Activated CD4-positive, alpha-beta T cell treated with anti-CD3 and anti-CD28 coated beads, Interleukin-2, amount 10 ng/mL, durations not matched to agents 24 days and 14 days (primary cell): ENCODE measurements at regions of chr19 and their contacts with region 1.

Region 1: GRCh38 chr19:16542045-16542909 is at the start of gene CHERP:
- DNase-seq: peak; percentile 99
- H3K4me3 Mint-ChIP-seq: peak within 1 kb of the TSS; percentile 91
- H3K27ac Mint-ChIP-seq: peak within 1 kb of the TSS; percentile 90
- H3K4me1 Mint-ChIP-seq: peaks cover 38% of the 10 kb centered on the region
- H3K27me3 Mint-ChIP-seq: no peaks in the 10 kb centered on the region
- total RNA-seq, gene CHERP: 88.6 and 89.8 TPM in 2 replicates

Region 2: DNA sequence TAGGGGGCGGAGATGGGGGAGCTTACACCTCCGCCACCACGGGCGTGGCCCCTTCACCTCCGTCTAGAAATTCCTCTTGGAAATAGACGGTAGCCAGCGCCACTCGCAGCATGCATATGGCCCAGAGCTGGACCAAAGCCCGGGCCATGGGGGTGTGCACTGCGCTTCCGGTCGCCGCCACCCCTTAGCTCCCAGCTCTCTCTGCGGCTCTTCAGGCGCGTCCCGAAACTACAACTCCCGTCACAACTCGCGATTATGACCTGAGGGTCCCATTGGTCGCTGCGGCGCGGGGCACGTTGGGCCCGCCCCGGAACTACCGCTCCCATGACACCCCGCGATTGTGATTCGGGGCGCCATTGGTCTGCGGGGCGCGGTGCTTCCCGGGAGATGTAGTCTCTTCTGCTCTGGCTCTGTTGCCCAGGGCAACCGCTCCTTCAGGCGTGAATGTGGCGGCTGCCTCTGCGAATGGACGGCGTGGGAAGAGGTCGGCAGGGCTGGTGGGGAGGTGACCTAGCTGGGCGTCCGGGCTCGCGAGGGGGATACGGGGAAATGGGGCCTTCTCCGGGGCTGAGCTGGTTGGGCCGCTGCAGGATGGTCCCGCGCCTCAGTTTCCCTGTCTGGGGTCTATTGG is 46.2 kb before region 1 on chr19 and contains the starts of genes C19orf44 and CALR3:
- intact Hi-C with region 1: loop called (anchors 1 kb)
- DNase-seq: peak; percentile 99
- H3K4me3 Mint-ChIP-seq: peak within 1 kb of the TSS; percentile 96
- H3K27ac Mint-ChIP-seq: peak within 1 kb of the TSS; percentile 93
- H3K4me1 Mint-ChIP-seq: peaks cover 14% of the 10 kb centered on the region
- H3K27me3 Mint-ChIP-seq: no peaks in the 10 kb centered on the region
- total RNA-seq, gene C19orf44: 4.9 and 5.4 TPM in 2 replicates
- total RNA-seq, gene CALR3: not detected in 2 replicates

Region 3: GRCh38 chr19:16566161-16566560 is 23.9 kb after region 1 on chr19:
- intact Hi-C with region 1: loop called (anchors 1 kb)
- DNase-seq: peak; percentile 94
- H3K4me3 Mint-ChIP-seq: peak overlapping the region; percentile 70
- H3K27ac Mint-ChIP-seq: peak overlapping the region; percentile 94
- H3K4me1 Mint-ChIP-seq: peaks cover 33% of the 10 kb centered on the region
- H3K27me3 Mint-ChIP-seq: no peaks in the 10 kb centered on the region

Region 4: GRCh38 chr19:16572332-16573211 is 30.3 kb after region 1 on chr19 and contains the start of gene SLC35E1:
- intact Hi-C with region 1: loop called (anchors 2 kb)
- DNase-seq: peak; percentile 98
- H3K4me3 Mint-ChIP-seq: peak within 1 kb of the TSS; percentile 93
- H3K27ac Mint-ChIP-seq: peak within 1 kb of the TSS; percentile 88
- H3K4me1 Mint-ChIP-seq: peaks cover 39% of the 10 kb centered on the region
- H3K27me3 Mint-ChIP-seq: no peaks in the 10 kb centered on the region
- total RNA-seq, gene SLC35E1: 60.2 and 65.0 TPM in 2 replicates

Region 5: DNA sequence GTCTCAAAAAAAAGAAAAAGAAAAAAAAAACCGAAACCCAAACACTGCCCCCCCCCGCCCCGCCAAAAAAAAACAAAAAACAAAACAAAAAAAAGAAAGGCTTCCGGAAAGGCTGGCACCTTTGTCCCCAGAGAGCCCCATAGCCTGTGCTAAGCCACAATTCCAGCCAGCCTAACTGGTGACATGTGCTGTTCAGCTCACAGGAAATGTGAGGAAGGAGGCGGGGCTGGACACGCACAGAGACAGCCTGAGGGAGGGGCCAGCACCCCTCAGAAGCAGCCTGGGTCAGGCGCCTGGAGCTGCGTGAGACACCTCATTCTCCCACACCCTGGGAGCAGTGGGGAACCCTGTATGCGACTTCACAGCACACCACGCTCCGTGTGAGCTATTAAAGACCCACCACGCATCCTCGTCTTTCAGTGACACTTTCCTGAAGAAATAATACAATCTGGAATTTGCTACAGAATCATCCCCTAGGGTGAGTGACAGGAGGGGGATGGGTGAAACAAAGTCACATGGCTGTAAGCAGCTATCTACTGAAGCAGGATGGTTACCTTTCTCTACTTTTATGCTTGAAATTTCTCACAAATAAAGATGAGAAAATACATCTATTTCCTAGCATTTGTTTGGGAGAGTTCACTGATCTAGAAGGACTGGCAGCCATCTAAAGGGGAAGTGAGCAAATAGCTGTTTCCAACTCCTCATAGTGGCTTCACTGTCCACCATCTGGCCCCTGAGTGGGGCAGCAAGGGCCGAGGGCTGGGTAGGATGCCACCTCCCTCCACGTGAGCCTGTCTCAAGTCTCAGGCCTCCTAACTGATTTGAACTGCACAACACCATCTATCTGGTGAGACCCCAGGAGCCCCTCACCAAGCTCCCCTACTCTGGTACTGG is 42.2 kb after region 1 on chr19:
- intact Hi-C with region 1: loop called (anchors 1 kb)
- DNase-seq: peak; percentile 97
- H3K4me3 Mint-ChIP-seq: peak overlapping the region; percentile 87
- H3K27ac Mint-ChIP-seq: peak overlapping the region; percentile 96
- H3K4me1 Mint-ChIP-seq: peaks cover 67% of the 10 kb centered on the region
- H3K27me3 Mint-ChIP-seq: no peaks in the 10 kb centered on the region

Region 6: DNA sequence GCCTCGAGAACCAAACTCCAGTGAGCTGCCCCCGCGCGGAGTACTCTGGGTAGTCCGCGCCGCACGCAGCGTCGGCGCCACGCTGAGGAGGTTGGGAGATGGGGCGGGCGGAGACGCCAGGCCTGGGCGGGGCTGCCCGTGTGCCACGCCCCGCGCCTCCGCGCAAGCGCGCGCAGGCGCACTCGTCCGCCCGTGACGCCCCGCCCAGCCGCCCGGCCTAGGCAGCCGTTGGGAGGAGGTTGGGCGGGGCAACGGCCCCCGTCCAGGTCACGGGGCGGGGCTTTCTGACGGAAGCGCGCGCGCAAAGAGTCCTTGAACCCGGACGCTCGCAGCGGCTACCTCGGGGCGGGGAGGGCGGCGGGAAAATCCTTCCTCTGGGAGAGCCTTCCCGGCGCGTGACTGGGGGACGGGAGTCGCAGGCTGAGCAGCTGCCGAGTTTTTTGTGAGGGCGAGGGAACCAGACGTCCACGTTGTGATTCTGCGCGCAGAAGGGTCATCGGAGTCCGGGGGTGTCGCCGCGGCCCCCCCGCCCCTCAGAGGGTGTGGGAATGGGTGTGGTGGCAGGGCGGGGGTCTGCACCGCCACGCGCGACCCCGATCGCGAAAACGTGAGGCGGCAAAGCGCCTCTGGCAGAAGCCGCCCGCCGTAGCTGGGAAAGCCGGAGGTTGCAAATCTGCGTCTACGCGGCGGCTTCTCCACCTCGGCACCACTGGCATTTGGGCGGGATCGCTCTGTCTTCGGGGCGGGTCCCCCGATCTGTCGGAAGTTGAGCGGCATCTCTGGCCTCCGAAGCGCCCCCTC is 86.1 kb after region 1 on chr19 and contains the start of gene MED26:
- intact Hi-C with region 1: loop called (anchors 1 kb)
- DNase-seq: peak; percentile 98
- H3K4me3 Mint-ChIP-seq: peak within 1 kb of the TSS; percentile 96
- H3K27ac Mint-ChIP-seq: peak within 1 kb of the TSS; percentile 99
- H3K4me1 Mint-ChIP-seq: peaks cover 32% of the 10 kb centered on the region
- H3K27me3 Mint-ChIP-seq: no peaks in the 10 kb centered on the region
- total RNA-seq, gene MED26: 15.5 and 16.8 TPM in 2 replicates